Sciatic nerve (tissue), 2 donors: ENCODE measurements at regions of chr5 and their contacts with region 1.

Region 1: DNA sequence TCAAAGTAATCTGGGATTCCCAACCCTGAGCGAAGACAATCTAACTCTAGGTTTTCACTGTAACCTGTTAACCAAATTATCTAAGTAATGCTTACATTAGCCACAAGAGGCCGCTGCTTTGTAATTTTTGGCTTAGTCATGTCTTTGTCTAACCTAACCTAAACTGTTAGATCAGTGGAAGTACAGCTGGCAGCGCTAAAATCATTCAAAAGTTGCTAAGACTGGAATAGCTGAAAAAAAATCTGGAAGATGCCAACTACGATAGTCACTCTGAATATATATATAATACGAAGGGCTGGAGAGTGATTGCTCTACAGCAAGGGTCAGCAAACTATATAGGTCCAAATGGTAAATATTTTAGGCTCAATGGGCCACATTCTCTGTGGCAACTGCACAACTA is 60.2 kb downstream of the FBXO38 start:
- DNase-seq: no peak
- ATAC-seq: peak; percentile 74

Region 2: DNA sequence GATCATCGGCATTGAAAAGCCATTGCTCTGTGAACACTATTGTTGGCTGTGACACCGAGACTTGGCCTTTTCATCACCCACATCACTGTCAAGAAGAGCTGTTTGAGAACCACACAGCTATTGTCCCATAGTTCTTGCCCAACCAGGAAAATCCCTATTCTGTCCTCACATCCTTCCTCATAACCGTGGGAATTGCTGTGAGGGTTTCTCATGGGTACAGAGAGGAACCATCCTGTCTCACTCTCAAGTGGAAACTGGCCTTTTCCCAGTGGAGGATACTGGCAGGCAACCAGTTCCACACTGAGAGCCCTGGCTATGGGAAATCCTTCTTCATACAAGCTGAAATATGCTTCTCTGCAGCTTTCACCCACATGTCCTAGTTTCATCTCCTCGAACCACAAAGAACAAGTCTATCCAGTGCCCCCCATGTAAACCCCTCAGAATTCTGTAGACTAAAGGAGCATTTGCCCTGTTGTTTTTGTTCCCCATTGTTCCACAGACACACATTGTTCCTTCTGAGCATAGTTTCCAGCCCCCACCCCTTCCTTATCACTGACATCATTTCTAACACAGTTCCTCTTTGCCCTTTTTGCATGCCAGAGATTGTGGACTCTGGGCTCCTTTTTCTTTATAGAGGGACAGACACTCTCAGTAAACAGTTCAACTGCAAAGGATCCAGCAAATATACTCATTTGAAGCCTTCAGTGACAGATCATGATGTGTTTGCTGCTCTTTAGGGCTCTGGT is 479.9 kb before region 1 on chr5:
- intact Hi-C with region 1: no loop called
- DNase-seq: no peak
- ATAC-seq: peak; percentile 36

Region 3: DNA sequence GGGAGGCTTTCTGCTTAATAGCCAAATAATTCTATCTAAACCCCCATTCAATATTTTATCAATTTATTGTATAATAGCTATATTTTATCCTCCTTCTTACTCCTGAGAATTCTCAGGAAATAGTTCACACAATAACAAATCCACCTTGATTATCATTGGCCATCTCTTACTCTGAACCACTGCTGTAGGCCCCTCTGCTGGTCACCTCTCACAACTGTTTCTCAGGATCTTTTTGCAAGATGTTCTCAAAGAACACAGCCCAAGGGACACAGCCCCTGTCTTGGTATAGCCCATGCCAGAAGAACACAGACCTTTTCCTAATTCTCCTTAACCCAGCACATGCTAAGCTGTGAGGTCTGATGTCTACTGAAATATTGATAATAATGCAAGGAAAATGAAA is 285.2 kb after region 1 on chr5:
- intact Hi-C with region 1: loop called (anchors 5 kb)
- DNase-seq: no peak
- ATAC-seq: no peak

Region 4: DNA sequence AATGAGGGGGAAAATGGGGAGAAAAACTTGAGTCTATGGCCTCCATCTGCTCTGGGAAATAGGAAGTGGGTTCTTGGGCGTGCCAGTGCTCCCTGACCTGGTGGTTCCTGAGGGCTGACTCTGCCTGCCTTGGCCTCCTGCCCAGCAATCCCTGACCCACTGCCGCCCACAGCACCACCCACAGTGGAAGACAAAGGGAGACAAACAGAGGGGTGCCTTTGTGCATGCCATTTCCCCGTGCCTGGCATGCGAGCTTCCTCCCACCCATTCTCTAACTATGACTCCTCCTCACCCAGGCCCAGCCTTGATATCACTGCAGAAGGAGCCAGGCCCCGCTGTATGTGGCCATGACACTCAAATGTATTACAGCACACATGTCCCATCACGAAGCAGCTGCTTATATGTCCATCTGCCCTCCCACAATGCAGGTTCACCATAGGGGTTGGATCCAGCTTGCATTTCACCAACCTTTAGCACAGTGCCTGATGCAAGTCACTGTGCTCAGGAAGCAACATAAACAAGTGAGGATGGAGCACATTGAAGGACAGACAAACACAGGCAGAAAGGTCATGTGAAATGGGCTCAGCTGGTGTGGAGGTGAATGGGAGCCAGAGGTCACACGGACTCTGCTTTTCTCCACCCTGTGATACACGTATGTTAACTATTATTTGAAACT is 466.8 kb after region 1 on chr5:
- intact Hi-C with region 1: no loop called
- DNase-seq: peak; percentile 71
- ATAC-seq: peak; percentile 60